ENCODE measurements at regions of chr4 and their contacts with region 1.

Region 1: GRCh38 chr4:123444290-123444731 is 47.7 kb downstream of the SPRY1 start:
- DNase-seq: peak; percentile 78
- ATAC-seq: peak; percentile 85
- H3K4me3 Mint-ChIP-seq: peak overlapping the region; percentile 76
- H3K27ac Mint-ChIP-seq: peak overlapping the region; percentile 94
- H3K4me1 Mint-ChIP-seq: peaks cover 46% of the 10 kb centered on the region
- H3K27me3 Mint-ChIP-seq: no peaks in the 10 kb centered on the region

Region 2: GRCh38 chr4:123418351-123418931 is 25.9 kb before region 1 on chr4:
- CTCF ChIA-PET with region 1: interaction called, 8 read pairs
- POLR2A ChIA-PET with region 1: interaction called, 10 read pairs
- DNase-seq: peak; percentile 59
- ATAC-seq: peak; percentile 30
- H3K4me3 Mint-ChIP-seq: peak overlapping the region; percentile 47
- H3K27ac Mint-ChIP-seq: peak overlapping the region; percentile 92
- H3K4me1 Mint-ChIP-seq: peaks cover 89% of the 10 kb centered on the region
- H3K27me3 Mint-ChIP-seq: no peaks in the 10 kb centered on the region

Region 3: GRCh38 chr4:123461996-123462395 is 17.7 kb after region 1 on chr4:
- CTCF ChIA-PET with region 1: no interaction called
- POLR2A ChIA-PET with region 1: no interaction called
- DNase-seq: no peak
- ATAC-seq: no peak
- H3K4me3 Mint-ChIP-seq: no peak overlapping the region
- H3K27ac Mint-ChIP-seq: no peak overlapping the region
- H3K4me1 Mint-ChIP-seq: peaks cover 13% of the 10 kb centered on the region
- H3K27me3 Mint-ChIP-seq: no peaks in the 10 kb centered on the region

Measured in activated CD8-positive, alpha-beta T cell treated with anti-CD3 and anti-CD28 coated beads, Interleukin-2, amount 10 ng/mL, durations not matched to agents 7 days and 5 days (primary cell).